Activated naive CD4-positive, alpha-beta T cell treated with anti-CD3 and anti-CD28 coated beads for 36 hours (primary cell): ENCODE measurements at regions of chr3 and their contacts with region 1.

Region 1: GRCh38 chr3:141452036-141452435 is 34.8 kb upstream of the RASA2 start:
- DNase-seq: peak; percentile 75
- H3K4me3 Mint-ChIP-seq: no peak overlapping the region
- H3K27ac Mint-ChIP-seq: no peak overlapping the region
- H3K4me1 Mint-ChIP-seq: peaks cover 20% of the 10 kb centered on the region
- H3K27me3 Mint-ChIP-seq: no peaks in the 10 kb centered on the region

Region 2: DNA sequence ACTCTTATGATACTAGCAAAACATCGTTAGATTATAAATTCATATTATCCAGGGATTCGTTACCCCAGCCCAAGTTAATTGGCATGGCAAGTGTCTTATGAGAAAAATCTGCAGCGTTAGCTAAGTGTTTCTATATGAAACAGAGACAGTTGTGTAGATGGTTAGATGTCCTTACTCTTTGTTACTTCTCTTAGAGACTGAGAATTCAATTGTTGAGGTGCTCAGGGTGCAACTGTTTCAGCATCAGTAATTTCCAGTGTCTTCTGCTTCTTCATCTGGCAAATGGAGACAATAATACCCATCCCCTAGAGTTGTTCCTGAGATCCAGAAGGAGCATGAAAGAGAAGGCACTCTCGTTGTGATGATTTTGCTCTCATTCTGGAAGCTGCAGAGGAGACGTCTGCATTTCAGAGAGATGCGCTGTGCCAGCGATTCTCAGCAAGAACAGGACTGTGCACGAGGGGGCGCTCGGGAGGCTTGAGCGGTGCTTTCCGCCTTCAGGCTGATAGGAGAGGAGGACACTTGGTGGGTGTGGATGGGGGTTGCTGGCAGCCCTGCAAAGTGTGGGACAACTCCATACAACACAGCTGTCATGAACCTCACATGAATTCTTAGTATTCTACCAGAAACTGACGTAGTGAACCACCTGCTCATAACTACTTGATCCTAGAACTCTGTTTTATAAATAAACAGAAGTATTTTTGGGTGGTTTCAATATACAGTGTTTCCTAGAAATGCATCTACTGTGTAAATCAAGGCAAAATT is 440.6 kb before region 1 on chr3:
- CTCF ChIA-PET with region 1: no interaction called
- intact Hi-C with region 1: loop called (anchors 5 kb)
- DNase-seq: peak; percentile 91
- H3K4me3 Mint-ChIP-seq: no peak overlapping the region
- H3K27ac Mint-ChIP-seq: no peak overlapping the region
- H3K4me1 Mint-ChIP-seq: peaks cover 5% of the 10 kb centered on the region
- H3K27me3 Mint-ChIP-seq: peaks cover 12% of the 10 kb centered on the region

Region 3: DNA sequence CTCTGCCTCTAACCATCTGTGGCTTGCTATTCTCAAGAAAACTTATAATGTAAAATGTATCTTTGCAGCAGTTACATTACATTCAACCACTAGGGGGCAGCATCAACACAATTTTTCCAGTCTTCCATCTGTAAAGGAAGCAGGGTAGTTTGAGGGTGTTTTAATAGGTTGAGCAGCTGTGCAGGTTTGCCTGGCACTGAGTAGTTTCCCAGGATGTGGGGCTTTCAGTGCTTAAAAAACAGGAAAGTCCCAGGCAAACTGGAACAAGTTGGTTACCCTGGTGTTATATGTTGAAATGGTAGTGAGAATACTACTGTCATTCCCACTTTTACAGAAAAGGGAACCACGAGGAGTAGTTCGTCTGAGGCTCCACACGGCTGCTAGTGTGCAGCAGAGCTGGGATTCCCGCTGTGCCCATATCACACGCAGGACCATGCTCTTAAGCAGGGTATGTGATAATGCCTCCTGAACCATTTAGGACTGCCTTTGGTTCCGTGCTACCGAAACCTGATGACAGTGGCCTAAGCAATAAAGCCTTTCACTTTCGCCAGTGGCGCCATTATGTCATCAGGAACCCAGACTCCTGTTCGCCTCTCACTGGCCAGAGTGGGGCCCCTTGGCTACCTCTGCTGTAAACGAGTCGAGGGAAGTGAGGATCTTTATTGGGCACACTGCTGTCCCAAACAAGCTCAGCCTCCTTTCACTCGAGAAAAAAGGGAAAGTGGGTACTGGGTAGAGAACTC is 148.4 kb before region 1 on chr3:
- CTCF ChIA-PET with region 1: interaction called, 415 read pairs
- intact Hi-C with region 1: loop called (anchors 1 kb)
- DNase-seq: peak; percentile 85
- H3K4me3 Mint-ChIP-seq: no peak overlapping the region
- H3K27ac Mint-ChIP-seq: no peak overlapping the region
- H3K4me1 Mint-ChIP-seq: peaks cover 55% of the 10 kb centered on the region
- H3K27me3 Mint-ChIP-seq: no peaks in the 10 kb centered on the region

Region 4: GRCh38 chr3:141360888-141361598 is 91.0 kb before region 1 on chr3:
- CTCF ChIA-PET with region 1: interaction called, 87 read pairs
- intact Hi-C with region 1: loop called (anchors 1 kb)
- DNase-seq: no peak
- H3K4me3 Mint-ChIP-seq: no peak overlapping the region
- H3K27ac Mint-ChIP-seq: no peak overlapping the region
- H3K4me1 Mint-ChIP-seq: peaks cover 8% of the 10 kb centered on the region
- H3K27me3 Mint-ChIP-seq: no peaks in the 10 kb centered on the region

Region 5: GRCh38 chr3:141370065-141370533 is 81.9 kb before region 1 on chr3:
- CTCF ChIA-PET with region 1: interaction called, 10 read pairs
- intact Hi-C with region 1: loop called (anchors 1 kb)
- DNase-seq: peak; percentile 70
- H3K4me3 Mint-ChIP-seq: no peak overlapping the region
- H3K27ac Mint-ChIP-seq: no peak overlapping the region
- H3K4me1 Mint-ChIP-seq: peaks cover 21% of the 10 kb centered on the region
- H3K27me3 Mint-ChIP-seq: no peaks in the 10 kb centered on the region

Region 6: DNA sequence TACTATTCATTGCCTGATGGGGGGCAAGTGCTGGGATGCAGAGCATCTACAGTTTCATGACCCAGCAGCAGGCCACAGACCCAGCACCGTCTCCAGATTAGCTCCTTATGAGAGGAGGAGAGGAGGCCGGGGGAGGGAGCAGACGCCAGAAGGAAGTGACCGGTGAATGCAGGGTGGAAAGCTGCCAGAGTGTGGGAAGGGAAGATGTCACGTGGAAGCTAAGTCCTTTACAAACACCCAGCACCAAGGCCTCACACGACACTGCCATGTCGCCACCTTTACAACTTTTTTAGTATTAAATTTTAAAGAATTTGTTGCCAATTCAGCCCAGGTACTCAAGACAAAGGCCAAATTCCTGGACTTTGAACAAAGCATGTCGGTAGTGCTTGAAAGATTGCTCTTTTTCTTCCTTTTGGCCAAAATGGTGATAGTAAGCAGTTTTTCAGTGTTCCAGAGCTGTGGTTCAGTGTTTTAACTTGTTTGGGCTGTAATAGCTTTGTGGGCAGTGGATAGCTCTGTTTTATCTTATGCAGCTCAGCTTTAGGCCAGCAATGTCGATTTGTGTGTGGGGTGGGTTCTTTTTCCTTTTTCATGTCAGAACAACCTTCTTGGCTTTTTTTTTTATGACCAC is 25.5 kb before region 1 on chr3:
- CTCF ChIA-PET with region 1: interaction called, 13 read pairs
- intact Hi-C with region 1: no loop called
- DNase-seq: no peak
- H3K4me3 Mint-ChIP-seq: no peak overlapping the region
- H3K27ac Mint-ChIP-seq: no peak overlapping the region
- H3K4me1 Mint-ChIP-seq: peaks cover 11% of the 10 kb centered on the region
- H3K27me3 Mint-ChIP-seq: no peaks in the 10 kb centered on the region

Region 7: DNA sequence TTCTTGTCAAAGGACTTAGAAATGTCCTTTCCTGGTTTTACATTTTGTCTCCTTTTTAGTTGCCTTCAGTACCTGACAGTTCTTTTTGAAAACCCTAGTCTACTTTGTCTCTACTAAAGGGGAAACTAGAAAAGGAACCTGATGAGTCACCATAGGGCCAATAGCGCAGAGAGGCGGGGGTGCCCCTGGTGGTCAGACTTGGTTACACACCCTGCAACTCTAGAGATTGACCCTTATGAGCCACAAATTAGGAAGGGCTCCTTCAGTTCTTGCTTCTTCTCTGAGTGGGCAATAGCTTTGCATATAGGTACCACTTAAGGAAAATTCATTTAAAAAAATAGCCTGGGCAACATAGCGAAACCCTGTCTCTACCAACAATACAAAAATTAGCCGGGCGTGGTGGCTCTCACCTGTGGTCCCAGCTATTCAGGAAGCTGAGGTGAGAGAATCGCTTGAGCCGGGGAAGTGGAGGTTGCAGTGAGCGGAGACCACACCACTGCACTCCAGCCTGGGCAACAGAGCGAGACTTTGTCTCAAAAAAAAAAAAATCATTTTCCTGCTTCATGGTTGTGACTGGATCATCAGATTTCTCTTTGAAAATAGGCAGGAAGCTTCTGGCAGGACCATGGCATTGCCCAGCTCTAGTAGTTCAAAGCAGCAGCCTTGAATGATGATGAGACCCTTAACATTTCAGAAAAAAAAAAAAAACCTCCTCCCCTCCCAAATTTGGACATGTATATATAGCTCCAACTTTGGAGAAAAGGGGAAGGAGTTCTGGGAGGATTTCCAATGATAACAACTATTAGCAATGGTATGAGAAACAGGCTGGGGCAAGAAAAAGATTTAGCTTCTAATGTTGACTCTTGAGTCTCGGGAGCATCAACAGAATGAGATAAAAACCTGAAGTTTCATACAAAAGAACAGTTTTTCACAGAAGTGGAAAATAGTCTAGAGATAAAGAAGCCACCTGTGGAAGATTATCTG is 10.4 kb before region 1 on chr3:
- CTCF ChIA-PET with region 1: interaction called, 48 read pairs
- intact Hi-C with region 1: no loop called
- DNase-seq: peak; percentile 91
- H3K4me3 Mint-ChIP-seq: no peak overlapping the region
- H3K27ac Mint-ChIP-seq: peak overlapping the region; percentile 73
- H3K4me1 Mint-ChIP-seq: peaks cover 23% of the 10 kb centered on the region
- H3K27me3 Mint-ChIP-seq: no peaks in the 10 kb centered on the region